PC-9 (cell line): ENCODE measurements at regions of chr12 and their contacts with region 1.

Region 1: GRCh38 chr12:25866586-25867378 is 91.7 kb upstream of the RASSF8 start:
- DNase-seq: no peak
- H3K4me3 ChIP-seq: no peak overlapping the region
- H3K27ac ChIP-seq: no peak overlapping the region
- H3K4me1 ChIP-seq: peaks cover 2% of the 10 kb centered on the region
- H3K27me3 ChIP-seq: no peaks in the 10 kb centered on the region
- CTCF ChIP-seq: no peak

Region 2: DNA sequence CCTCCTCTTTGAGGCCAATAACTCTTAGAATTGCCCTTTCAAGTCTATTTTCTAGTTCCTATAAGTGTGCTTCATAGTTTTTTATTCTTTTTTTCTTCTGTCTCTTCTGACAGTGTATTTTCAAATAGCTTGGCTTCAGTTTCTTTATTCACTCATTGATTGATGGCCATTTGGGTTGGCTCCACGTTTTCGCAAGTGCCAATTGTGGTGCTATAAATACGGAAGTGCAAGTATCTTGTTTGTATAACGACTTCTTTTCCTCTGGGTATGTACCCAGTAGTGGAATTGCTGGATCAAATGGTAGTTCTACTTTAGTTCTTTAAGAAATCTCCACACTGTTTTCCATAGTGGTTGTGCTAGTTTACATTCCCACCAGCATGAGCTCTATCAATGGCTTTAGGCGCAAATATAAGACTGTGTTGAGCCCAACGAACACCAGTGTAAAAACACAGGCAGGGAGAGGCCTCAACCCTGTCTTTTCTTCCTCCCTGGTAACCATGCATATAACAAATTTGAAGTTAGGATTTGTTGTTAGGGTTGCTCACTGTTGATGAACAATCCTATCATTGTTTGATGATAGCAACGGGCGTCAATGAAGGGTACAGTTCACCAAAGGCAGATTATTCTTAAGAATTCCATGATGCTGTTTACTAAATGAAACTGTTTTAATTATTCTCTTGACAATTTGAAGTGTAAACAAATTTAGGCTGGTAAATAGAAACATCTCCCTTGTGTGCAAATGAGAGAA is 300.4 kb before region 1 on chr12:
- CTCF ChIA-PET with region 1: interaction called, 12 read pairs
- POLR2A ChIA-PET with region 1: no interaction called
- intact Hi-C with region 1: no loop called
- DNase-seq: no peak
- H3K4me3 ChIP-seq: no peak overlapping the region
- H3K27ac ChIP-seq: no peak overlapping the region
- H3K4me1 ChIP-seq: no peaks in the 10 kb centered on the region
- H3K27me3 ChIP-seq: no peaks in the 10 kb centered on the region
- CTCF ChIP-seq: no peak

Region 3: DNA sequence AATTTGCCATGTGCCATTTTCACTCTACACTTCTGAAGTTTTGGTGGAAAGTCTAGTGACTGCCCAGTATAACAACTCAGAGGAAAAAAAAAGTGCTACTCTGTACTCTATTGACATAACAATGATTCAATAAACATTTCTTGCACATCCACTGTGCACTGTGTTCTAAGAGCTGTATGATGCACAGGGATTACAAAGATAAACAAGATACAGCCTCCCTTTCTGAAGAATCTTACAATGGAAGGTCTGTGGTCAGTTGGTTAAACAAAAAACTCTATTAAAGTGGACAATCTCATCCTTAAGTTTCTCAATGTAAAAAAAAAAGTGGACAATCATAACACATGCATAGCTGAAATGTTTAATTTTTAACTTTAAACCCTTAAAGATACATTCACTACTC is 14.0 kb before region 1 on chr12:
- CTCF ChIA-PET with region 1: no interaction called
- POLR2A ChIA-PET with region 1: no interaction called
- intact Hi-C with region 1: no loop called
- DNase-seq: peak in 1 of 2 experiments; percentile 60
- H3K4me3 ChIP-seq: no peak overlapping the region
- H3K27ac ChIP-seq: no peak overlapping the region
- H3K4me1 ChIP-seq: no peaks in the 10 kb centered on the region
- H3K27me3 ChIP-seq: no peaks in the 10 kb centered on the region
- CTCF ChIP-seq: no peak

Region 4: GRCh38 chr12:25896981-25897380 is 30.2 kb after region 1 on chr12:
- CTCF ChIA-PET with region 1: no interaction called
- POLR2A ChIA-PET with region 1: interaction called, 12 read pairs
- intact Hi-C with region 1: no loop called
- DNase-seq: no peak
- H3K4me3 ChIP-seq: no peak overlapping the region
- H3K27ac ChIP-seq: no peak overlapping the region
- H3K4me1 ChIP-seq: no peaks in the 10 kb centered on the region
- H3K27me3 ChIP-seq: no peaks in the 10 kb centered on the region
- CTCF ChIP-seq: no peak